OCI-LY7 (cell line): ENCODE measurements at regions of chr3 and their contacts with region 1.

Region 1: GRCh38 chr3:53845103-53845880 is 927 bp downstream of the CHDH start:
- DNase-seq: peak; percentile 20
- H3K4me3 ChIP-seq: peak overlapping the region; percentile 54
- H3K27ac ChIP-seq: no peak overlapping the region
- H3K4me1 ChIP-seq: peaks cover 15% of the 10 kb centered on the region
- CTCF ChIP-seq: 0 out of 2 replicates have a peak, but pooled peaks have one; percentile 23

Region 2: GRCh38 chr3:53402326-53402725 is 443.0 kb before region 1 on chr3:
- CTCF ChIA-PET with region 1: no interaction called
- POLR2A ChIA-PET with region 1: no interaction called
- intact Hi-C with region 1: no loop called
- DNase-seq: no peak
- H3K4me3 ChIP-seq: no peak overlapping the region
- H3K27ac ChIP-seq: no peak overlapping the region
- H3K4me1 ChIP-seq: no peaks in the 10 kb centered on the region
- CTCF ChIP-seq: no peak

Region 3: GRCh38 chr3:53748512-53749271 is 96.6 kb before region 1 on chr3:
- CTCF ChIA-PET with region 1: no interaction called
- POLR2A ChIA-PET with region 1: no interaction called
- intact Hi-C with region 1: loop called (anchors 5 kb)
- DNase-seq: peak; percentile 71
- H3K4me3 ChIP-seq: no peak overlapping the region
- H3K27ac ChIP-seq: no peak overlapping the region
- H3K4me1 ChIP-seq: peaks cover 27% of the 10 kb centered on the region
- CTCF ChIP-seq: no peak

Region 4: DNA sequence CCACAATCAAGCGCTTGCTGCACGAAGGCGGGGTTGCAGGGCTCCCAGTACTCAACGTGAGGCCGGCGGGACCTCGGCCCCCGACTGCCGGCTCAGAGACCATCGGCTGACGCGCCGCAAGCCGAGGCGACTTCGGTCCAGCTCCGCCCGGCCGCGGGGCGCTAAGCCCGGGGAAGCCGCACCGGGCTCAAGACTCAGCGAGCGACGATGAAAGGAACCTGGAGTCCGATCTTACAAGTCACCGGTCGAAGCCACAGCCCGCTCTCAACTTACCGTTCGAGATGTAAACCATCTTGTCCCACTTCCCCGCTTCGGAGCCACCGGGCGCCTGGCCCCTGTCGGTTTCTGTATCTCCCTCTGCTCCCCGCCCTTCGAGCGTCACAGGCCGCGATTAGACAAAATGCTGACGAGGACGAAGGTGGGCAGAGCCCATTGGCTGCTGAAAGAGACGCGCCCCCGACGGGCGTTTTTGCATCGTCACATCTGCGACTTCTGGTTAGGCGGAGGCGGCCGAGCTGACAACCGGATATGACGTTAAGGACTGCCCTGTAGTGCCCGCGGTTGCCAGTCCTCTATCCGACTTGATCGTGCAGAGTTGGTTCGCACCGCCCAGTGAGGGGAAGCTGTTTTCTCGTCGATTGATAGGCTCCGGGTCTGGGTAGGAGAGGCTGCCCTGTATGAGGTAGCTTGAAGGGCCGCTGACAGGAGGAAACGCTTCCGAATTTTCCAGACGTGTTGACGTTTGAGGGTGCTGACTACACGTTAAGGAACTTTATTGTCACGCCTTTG is 46.4 kb after region 1 on chr3 and contains the start of gene SELENOK:
- CTCF ChIA-PET with region 1: no interaction called
- POLR2A ChIA-PET with region 1: no interaction called
- intact Hi-C with region 1: loop called (anchors 2 kb)
- DNase-seq: peak; percentile 99
- H3K4me3 ChIP-seq: peak within 1 kb of the TSS; percentile 92
- H3K27ac ChIP-seq: peak within 1 kb of the TSS; percentile 45
- H3K4me1 ChIP-seq: peaks cover 21% of the 10 kb centered on the region
- CTCF ChIP-seq: no peak
- total RNA-seq, gene SELENOK: 48.7 and 63.8 TPM in 2 replicates